Thyroid gland (tissue), 4 donors: ENCODE measurements at regions of chr14 and their contacts with region 1.

Region 1: GRCh38 chr14:67933266-67933665 is 113.7 kb downstream of the RAD51B start:
- DNase-seq: no peak
- H3K4me3 ChIP-seq: no peak overlapping the region
- H3K27ac ChIP-seq: no peak overlapping the region
- H3K4me1 ChIP-seq: peaks cover 0 to 3% of the 10 kb centered on the region in 2 donors
- H3K27me3 ChIP-seq: no peaks in the 10 kb centered on the region
- CTCF ChIP-seq: no peak
- POLR2A ChIP-seq: no peak

Region 2: GRCh38 chr14:68476212-68476907 is 543.1 kb after region 1 on chr14:
- intact Hi-C with region 1: no loop called
- DNase-seq: peak; percentile 90 to 92
- H3K4me3 ChIP-seq: no peak overlapping the region
- H3K27ac ChIP-seq: peak overlapping the region; percentile 92 to 97 (median 94)
- H3K4me1 ChIP-seq: peaks cover 50 to 82% of the 10 kb centered on the region in 2 donors
- H3K27me3 ChIP-seq: no peaks in the 10 kb centered on the region
- CTCF ChIP-seq: no peak
- POLR2A ChIP-seq: peak in 1 of 2 donors; percentile 60

Region 3: DNA sequence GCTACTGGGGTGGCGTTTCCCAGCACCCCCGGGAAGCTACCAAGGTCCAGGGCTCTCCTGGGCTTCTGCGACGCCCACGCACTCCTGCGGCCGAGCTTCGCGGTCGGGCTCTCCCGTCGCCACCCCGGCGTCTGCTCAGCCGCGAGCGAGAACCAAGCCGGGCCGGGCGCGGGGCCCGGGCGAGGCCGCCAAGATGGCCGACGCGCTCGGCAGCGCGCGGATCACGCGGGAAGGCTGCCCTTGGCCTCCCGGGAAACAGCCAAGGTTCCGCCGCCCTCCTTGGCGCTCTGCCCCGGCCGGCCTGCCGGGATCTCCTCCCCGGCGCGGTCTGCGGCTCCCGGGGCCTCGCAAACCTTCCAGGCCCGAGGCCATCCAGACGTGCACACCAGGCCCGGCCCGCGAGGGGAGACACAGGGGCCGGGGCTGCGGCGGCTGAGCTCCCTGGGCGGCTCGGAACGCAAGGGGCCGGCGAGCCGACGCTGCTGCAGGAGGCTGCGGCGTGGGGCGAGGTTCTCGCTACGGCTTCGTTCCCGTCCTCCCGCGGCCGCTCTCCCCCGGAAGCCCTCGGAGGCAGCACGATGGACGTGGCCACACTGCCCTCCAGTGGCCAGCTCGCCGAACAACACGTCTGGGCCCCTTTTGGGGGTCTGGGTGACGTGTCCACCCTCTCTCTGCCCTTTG is 883.1 kb after region 1 on chr14:
- intact Hi-C with region 1: loop called (anchors 2 kb)
- DNase-seq: peak; percentile 89 to 90
- H3K4me3 ChIP-seq: peak overlapping the region in 1 of 3 donors; percentile 32
- H3K27ac ChIP-seq: peak overlapping the region; percentile 90 to 100 (median 99)
- H3K4me1 ChIP-seq: peaks cover 37 to 42% of the 10 kb centered on the region in 2 donors
- H3K27me3 ChIP-seq: no peaks in the 10 kb centered on the region
- CTCF ChIP-seq: peak; percentile 86 to 99 (median 97)
- POLR2A ChIP-seq: peak; percentile 2 to 80